Colonic mucosa (tissue), 4 donors: ENCODE measurements at regions of chr12 and their contacts with region 1.

Region 1: DNA sequence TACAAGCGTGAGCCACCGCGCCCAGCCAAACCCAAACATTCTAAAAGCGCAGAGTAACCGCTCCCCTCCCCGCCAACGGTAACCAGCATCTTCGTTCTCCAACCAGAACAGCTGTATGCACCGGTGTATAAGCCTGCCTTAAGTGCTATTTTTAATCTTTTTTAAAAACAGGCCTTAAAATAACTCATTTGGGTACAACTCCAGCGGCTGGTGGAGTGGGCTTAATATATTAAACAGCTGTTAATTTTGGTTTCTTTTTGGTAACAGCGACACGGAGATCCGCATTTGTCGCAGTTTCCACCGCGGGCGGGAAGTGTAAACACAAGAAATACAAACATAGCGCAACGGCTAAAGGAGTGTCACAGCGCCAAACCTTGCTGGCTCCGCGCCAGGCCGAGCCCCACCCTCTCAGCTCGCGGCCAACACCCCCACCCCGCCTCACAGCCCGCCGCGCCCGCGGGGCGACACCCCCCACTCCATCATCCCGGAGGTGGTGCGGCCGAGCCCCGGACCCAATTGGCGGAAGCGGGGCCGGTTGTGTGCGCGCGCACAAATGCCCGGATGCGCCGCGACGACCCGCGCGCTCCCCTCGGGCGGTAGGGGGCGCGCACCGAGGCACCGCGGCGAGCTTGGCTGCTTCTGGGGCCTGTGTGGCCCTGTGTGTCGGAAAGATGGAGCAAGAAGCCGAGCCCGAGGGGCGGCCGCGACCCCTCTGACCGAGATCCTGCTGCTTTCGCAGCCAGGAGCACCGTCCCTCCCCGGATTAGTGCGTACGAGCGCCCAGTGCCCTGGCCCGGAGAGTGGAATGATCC is at the start of gene MDM2:
- DNase-seq: peak; percentile 97
- H3K4me3 ChIP-seq: peak within 1 kb of the TSS; percentile 85
- H3K27ac ChIP-seq: peak within 1 kb of the TSS; percentile 100
- H3K4me1 ChIP-seq: no peaks in the 10 kb centered on the region
- H3K27me3 ChIP-seq: no peaks in the 10 kb centered on the region
- CTCF ChIP-seq: peak; percentile 82
- total RNA-seq, gene MDM2: 94.8 to 107 TPM

Region 2: GRCh38 chr12:68745904-68746571 is 61.7 kb before region 1 on chr12 and contains the start of gene SLC35E3:
- intact Hi-C with region 1: loop called (anchors 10 kb)
- DNase-seq: peak; percentile 96
- H3K4me3 ChIP-seq: peak within 1 kb of the TSS; percentile 85
- H3K27ac ChIP-seq: peak within 1 kb of the TSS; percentile 76
- H3K4me1 ChIP-seq: peaks cover 6% of the 10 kb centered on the region
- H3K27me3 ChIP-seq: no peaks in the 10 kb centered on the region
- CTCF ChIP-seq: no peak
- total RNA-seq, gene SLC35E3: 6.8 to 7.1 TPM